Posterior vena cava (tissue), 2 donors: ENCODE measurements at regions of chr1 and their contacts with region 1.

Region 1: GRCh38 chr1:229094476-229095311 is 176.2 kb upstream of the RAB4A start:
- DNase-seq: no peak

Region 2: GRCh38 chr1:228964178-228965089 is 130.3 kb before region 1 on chr1:
- intact Hi-C with region 1: no loop called
- DNase-seq: no peak

Region 3: DNA sequence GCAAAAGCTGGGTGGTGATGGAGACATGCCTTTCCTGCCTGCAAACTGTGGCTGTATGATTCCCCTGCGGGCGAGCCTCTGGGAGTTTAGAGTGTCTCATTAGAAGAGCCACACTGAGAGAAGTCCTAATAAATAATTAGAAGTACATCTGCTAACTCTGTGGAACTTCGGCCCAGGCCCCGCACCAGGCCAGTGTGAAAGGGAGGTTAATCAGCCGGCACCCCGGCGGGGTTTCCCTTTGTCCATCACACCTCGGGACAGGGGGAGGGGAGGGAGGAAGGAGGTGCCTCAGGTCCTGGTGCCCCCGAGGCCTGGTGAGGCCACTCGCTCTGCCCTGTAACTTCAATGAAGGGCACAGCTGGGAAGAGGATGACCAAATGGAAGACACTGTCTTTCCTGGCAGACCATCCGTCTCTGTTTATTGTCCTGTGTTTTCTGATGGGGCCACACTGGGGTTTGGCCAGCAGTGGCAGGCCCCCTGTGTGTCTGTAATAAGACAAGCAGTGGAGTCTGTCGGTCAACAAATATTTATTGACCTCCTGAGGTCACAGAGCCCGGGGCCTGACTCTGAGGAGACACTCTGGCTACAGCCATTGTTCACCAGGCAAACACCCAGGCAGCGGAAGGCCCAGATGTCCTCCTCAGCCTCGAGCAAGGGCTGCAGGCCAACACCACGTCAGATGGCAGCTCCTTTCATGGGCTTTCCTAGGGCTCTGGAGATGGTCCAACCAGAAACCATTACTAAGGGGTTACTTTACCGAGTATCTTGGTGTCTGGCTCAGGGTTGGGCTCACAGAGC is 91.3 kb before region 1 on chr1:
- intact Hi-C with region 1: loop called in 1 of 2 experiments (anchors 10 kb)
- DNase-seq: no peak

Region 4: GRCh38 chr1:229027622-229028182 is 67.0 kb before region 1 on chr1:
- intact Hi-C with region 1: no loop called
- DNase-seq: no peak

Region 5: DNA sequence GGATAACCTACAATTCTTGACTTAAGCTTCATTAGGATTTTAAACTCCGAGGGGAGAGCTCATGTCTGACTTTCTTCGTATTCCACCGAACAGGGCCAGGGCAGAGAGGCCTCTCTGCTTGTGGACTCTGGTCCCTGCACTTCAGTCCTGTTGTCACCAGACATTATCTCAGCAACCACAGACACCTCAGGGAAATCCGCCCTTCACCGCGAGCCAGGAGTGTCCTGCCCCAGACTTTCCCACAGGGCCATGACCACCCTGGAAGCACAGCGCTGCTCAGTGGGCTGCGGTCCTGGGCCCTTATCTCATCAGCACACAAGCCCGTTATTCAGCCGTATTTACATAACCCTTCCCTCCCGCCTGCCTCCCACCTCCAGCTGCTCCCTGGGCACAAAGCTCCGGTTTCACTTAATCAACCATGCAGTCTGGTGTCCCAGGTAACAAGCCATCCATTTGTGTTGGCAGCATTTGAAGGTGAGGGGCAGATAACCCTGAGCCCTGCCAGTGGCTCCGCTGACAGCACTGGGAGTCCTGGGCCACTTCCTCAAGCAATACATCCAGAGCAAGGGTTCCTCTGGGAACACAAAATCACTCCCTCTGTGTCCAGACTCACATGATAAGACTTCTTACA is 53.5 kb after region 1 on chr1:
- intact Hi-C with region 1: loop called in 1 of 2 experiments (anchors 2 kb)
- DNase-seq: no peak

Region 6: DNA sequence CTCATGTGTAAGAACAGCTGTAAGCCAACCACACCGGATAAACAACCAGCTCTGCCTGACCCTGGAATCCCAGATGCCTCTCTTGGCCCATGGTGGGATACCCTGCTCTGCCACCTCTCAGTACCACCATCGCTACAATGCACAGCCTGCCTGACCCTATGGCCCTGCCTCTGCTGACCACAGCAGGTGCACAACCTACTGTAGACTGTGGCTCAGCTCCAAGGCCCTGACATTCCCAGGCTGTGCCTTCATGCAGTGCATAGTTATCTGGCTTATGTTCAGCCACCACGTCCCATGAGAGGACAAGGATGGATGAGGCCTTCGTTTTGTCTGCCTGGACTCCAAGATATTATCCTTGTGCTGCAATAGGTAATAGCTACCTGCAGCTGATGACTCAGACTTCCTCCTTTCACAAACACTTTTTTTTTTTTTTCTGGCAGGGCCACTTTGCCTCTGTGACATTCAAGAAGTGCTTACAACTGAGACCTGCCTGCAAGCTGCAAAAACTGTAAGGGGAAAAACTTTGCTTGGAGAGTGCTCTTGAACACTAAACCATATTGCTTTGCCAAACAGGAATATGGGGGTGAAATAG is 709.0 kb after region 1 on chr1:
- intact Hi-C with region 1: no loop called
- DNase-seq: no peak